CD4-positive, alpha-beta T cell (primary cell): ENCODE measurements at regions of chr2 and their contacts with region 1.

Region 1: GRCh38 chr2:147910990-147911473 is 66.2 kb downstream of the ACVR2A start:
- DNase-seq: peak in 10 of 14 experiments; percentile 2 to 76 (median 18)
- ATAC-seq: no peak
- H3K4me3 ChIP-seq: no peak overlapping the region
- H3K4me3 Mint-ChIP-seq: no peak overlapping the region
- H3K27ac ChIP-seq: no peak overlapping the region
- H3K27ac Mint-ChIP-seq: no peak overlapping the region
- H3K4me1 ChIP-seq: no peaks in the 10 kb centered on the region
- H3K4me1 Mint-ChIP-seq: peaks cover 11% of the 10 kb centered on the region
- H3K27me3 ChIP-seq: no peaks in the 10 kb centered on the region
- H3K27me3 Mint-ChIP-seq: no peaks in the 10 kb centered on the region
- CTCF ChIP-seq: peak; percentile 95

Region 2: GRCh38 chr2:146734042-146734820 is 1176.8 kb before region 1 on chr2:
- CTCF ChIA-PET with region 1: no interaction called
- POLR2A ChIA-PET with region 1: no interaction called
- intact Hi-C with region 1: loop called (anchors 2 to 10 kb)
- DNase-seq: peak in 3 of 14 experiments; percentile 4 to 7 (median 5)
- ATAC-seq: no peak
- H3K4me3 ChIP-seq: no peak overlapping the region
- H3K4me3 Mint-ChIP-seq: no peak overlapping the region
- H3K27ac ChIP-seq: no peak overlapping the region
- H3K27ac Mint-ChIP-seq: no peak overlapping the region
- H3K4me1 ChIP-seq: no peaks in the 10 kb centered on the region
- H3K4me1 Mint-ChIP-seq: no peaks in the 10 kb centered on the region
- H3K27me3 ChIP-seq: no peaks in the 10 kb centered on the region
- H3K27me3 Mint-ChIP-seq: no peaks in the 10 kb centered on the region
- CTCF ChIP-seq: no peak

Region 3: DNA sequence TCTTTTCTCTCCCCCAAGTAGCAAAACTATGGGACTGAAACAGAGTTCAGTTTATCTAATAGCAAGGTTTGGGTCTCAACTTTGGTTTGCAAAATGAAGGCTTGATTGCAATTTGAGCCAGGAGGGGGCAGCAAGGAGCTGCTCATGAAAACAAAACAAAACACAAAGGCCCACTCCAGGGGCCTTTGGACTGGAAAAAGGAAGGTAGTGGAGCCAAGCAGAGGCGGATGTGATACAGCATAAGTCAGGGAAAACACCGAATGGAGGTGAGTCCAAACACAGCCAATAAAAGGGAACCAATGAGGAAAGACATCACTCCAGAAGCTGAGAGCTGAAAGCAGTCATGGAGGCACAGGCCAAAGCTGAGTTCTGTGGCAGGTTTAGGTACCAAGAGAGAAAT is 865.9 kb before region 1 on chr2:
- CTCF ChIA-PET with region 1: interaction called, 10 read pairs
- POLR2A ChIA-PET with region 1: interaction called, 5 read pairs
- intact Hi-C with region 1: loop called (anchors 1 to 2 kb)
- DNase-seq: peak in 13 of 14 experiments; percentile 3 to 56 (median 20)
- ATAC-seq: no peak
- H3K4me3 ChIP-seq: no peak overlapping the region
- H3K4me3 Mint-ChIP-seq: no peak overlapping the region
- H3K27ac ChIP-seq: no peak overlapping the region
- H3K27ac Mint-ChIP-seq: no peak overlapping the region
- H3K4me1 ChIP-seq: no peaks in the 10 kb centered on the region
- H3K4me1 Mint-ChIP-seq: no peaks in the 10 kb centered on the region
- H3K27me3 ChIP-seq: no peaks in the 10 kb centered on the region
- H3K27me3 Mint-ChIP-seq: peaks cover 5% of the 10 kb centered on the region
- CTCF ChIP-seq: peak; percentile 51

Region 4: GRCh38 chr2:147082850-147083522 is 828.0 kb before region 1 on chr2:
- CTCF ChIA-PET with region 1: interaction called, 4 read pairs
- POLR2A ChIA-PET with region 1: interaction called, 3 read pairs
- intact Hi-C with region 1: loop called (anchors 1 kb)
- DNase-seq: peak in 12 of 14 experiments; percentile 7 to 73 (median 40)
- ATAC-seq: peak; percentile 69
- H3K4me3 ChIP-seq: no peak overlapping the region
- H3K4me3 Mint-ChIP-seq: no peak overlapping the region
- H3K27ac ChIP-seq: no peak overlapping the region
- H3K27ac Mint-ChIP-seq: no peak overlapping the region
- H3K4me1 ChIP-seq: no peaks in the 10 kb centered on the region
- H3K4me1 Mint-ChIP-seq: no peaks in the 10 kb centered on the region
- H3K27me3 ChIP-seq: no peaks in the 10 kb centered on the region
- H3K27me3 Mint-ChIP-seq: peaks cover 3% of the 10 kb centered on the region
- CTCF ChIP-seq: peak; percentile 83

Region 5: GRCh38 chr2:147288131-147288530 is 622.9 kb before region 1 on chr2:
- CTCF ChIA-PET with region 1: no interaction called
- POLR2A ChIA-PET with region 1: no interaction called
- intact Hi-C with region 1: loop called (anchors 1 to 5 kb)
- DNase-seq: peak in 10 of 14 experiments; percentile 2 to 81 (median 18)
- ATAC-seq: peak; percentile 97
- H3K4me3 ChIP-seq: no peak overlapping the region
- H3K4me3 Mint-ChIP-seq: no peak overlapping the region
- H3K27ac ChIP-seq: no peak overlapping the region
- H3K27ac Mint-ChIP-seq: peak overlapping the region; percentile 10
- H3K4me1 ChIP-seq: no peaks in the 10 kb centered on the region
- H3K4me1 Mint-ChIP-seq: peaks cover 20% of the 10 kb centered on the region
- H3K27me3 ChIP-seq: no peaks in the 10 kb centered on the region
- H3K27me3 Mint-ChIP-seq: no peaks in the 10 kb centered on the region
- CTCF ChIP-seq: no peak

Region 6: DNA sequence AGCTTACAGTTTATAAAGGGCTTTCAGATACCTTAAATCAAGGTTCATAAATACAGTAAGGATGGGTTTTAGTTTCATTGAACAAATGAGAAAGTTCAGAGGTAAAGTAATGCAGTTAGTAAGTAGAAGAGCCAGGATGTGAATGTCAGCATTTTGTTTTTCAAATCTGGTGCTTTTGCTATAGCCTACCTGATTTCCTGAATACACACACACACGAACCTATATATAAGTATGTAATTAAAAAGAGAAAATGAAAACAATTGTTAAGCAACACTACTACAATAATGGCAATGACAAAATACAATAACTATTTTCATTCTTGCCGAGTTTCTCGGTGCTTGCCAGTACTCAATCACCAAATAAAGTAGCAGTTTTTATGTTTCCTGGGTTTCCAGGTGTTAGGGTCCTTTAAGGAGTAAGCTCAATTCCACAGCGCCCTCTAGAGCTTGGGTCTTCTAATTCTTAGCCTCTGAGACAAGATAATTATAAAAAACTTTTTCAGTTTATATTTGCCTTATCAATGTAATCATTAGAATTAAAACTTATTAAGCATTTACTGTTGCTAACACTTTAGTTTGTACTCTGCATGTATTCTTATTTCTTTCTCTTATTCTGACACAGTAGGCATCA is 579.1 kb before region 1 on chr2:
- CTCF ChIA-PET with region 1: interaction called, 3 read pairs
- POLR2A ChIA-PET with region 1: no interaction called
- intact Hi-C with region 1: loop called in 1 of 2 experiments (anchors 5 kb)
- DNase-seq: peak in 13 of 14 experiments; percentile 4 to 69 (median 43)
- ATAC-seq: peak; percentile 41
- H3K4me3 ChIP-seq: no peak overlapping the region
- H3K4me3 Mint-ChIP-seq: no peak overlapping the region
- H3K27ac ChIP-seq: no peak overlapping the region
- H3K27ac Mint-ChIP-seq: no peak overlapping the region
- H3K4me1 ChIP-seq: no peaks in the 10 kb centered on the region
- H3K4me1 Mint-ChIP-seq: peaks cover 13% of the 10 kb centered on the region
- H3K27me3 ChIP-seq: no peaks in the 10 kb centered on the region
- H3K27me3 Mint-ChIP-seq: peaks cover 5% of the 10 kb centered on the region
- CTCF ChIP-seq: peak; percentile 47